Naive thymus-derived CD4-positive, alpha-beta T cell (primary cell): ENCODE measurements at regions of chr14 and their contacts with region 1.

Region 1: DNA sequence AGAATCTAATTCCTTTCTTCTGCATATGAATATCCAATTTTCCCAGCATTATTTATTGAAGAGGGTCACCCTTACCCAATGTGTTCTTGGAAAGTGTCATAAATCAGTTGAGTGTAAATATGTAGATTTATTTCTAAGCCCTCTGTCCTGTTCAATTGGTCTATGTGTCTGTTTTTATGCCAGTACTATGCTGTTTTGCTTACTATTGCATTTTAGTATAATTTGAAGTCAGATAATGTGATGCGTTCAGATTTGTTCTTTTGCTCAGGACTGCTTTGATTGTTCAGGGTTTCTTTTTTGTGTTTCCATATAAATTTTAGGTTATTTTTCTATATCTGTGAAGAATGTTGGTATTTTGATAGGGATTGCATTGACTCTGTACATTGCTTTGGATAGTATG is 420.4 kb upstream of the MIS18BP1 start:
- DNase-seq: no peak
- ATAC-seq: no peak
- H3K4me3 ChIP-seq: no peak overlapping the region
- H3K4me3 Mint-ChIP-seq: no peak overlapping the region
- H3K27ac ChIP-seq: no peak overlapping the region
- H3K27ac Mint-ChIP-seq: no peak overlapping the region
- H3K4me1 ChIP-seq: no peaks in the 10 kb centered on the region
- H3K4me1 Mint-ChIP-seq: no peaks in the 10 kb centered on the region
- H3K27me3 ChIP-seq: no peaks in the 10 kb centered on the region
- H3K27me3 Mint-ChIP-seq: no peaks in the 10 kb centered on the region

Region 2: DNA sequence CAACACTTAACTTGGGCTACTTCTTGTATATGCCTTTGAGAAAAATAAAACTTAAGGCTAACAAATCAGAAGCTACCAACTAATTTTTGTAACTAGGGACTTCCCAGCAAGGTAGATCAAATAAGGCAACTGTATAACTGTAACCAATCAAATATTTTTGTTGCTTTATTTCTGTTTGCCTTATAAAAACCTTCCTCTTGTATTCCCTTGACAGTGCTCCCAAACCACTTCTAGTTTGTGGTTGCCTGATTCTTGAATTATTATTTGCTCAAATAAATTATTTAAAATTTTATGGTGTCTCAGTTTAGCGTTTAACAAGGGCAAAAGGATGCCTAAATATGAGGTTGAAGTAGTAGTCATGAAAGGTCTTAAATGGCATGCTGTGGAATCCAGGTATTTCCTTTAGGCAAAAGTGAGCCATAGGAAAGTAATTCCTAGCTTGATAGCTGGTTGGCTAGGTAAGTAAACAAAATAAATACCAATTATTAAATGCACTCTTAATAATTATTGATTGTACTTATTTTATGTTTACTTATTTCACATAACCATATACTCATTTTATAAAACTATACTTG is 345.5 kb after region 1 on chr14:
- CTCF ChIA-PET with region 1: no interaction called
- POLR2A ChIA-PET with region 1: no interaction called
- intact Hi-C with region 1: loop called in 1 of 2 experiments (anchors 5 kb)
- DNase-seq: no peak
- ATAC-seq: no peak
- H3K4me3 ChIP-seq: no peak overlapping the region
- H3K4me3 Mint-ChIP-seq: no peak overlapping the region
- H3K27ac ChIP-seq: no peak overlapping the region
- H3K27ac Mint-ChIP-seq: no peak overlapping the region
- H3K4me1 ChIP-seq: no peaks in the 10 kb centered on the region
- H3K4me1 Mint-ChIP-seq: no peaks in the 10 kb centered on the region
- H3K27me3 ChIP-seq: no peaks in the 10 kb centered on the region
- H3K27me3 Mint-ChIP-seq: no peaks in the 10 kb centered on the region

Region 3: DNA sequence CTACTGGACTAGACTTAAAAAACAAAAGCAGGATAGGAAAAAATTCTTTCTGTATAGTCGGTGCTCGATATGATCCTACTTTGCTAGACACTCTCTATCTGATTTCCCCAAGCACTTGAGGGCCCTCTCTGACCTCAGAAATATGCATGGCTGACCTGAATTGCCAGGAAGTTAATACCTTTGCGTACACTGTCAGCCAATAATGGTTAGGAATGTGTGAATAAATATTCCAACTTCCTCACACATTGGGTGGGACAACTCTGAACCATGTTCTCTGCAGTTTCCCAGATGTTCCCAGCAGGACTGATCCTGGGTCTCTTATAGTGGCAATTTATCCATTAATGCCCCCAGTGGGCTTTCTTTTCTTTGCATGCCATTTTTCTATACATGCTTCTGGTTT is 998.7 kb after region 1 on chr14:
- CTCF ChIA-PET with region 1: no interaction called
- POLR2A ChIA-PET with region 1: no interaction called
- intact Hi-C with region 1: no loop called
- DNase-seq: no peak
- ATAC-seq: no peak
- H3K4me3 ChIP-seq: no peak overlapping the region
- H3K4me3 Mint-ChIP-seq: no peak overlapping the region
- H3K27ac ChIP-seq: no peak overlapping the region
- H3K27ac Mint-ChIP-seq: no peak overlapping the region
- H3K4me1 ChIP-seq: no peaks in the 10 kb centered on the region
- H3K4me1 Mint-ChIP-seq: no peaks in the 10 kb centered on the region
- H3K27me3 ChIP-seq: no peaks in the 10 kb centered on the region
- H3K27me3 Mint-ChIP-seq: no peaks in the 10 kb centered on the region